ENCODE measurements at regions of chr6 and their contacts with region 1.

Region 1: GRCh38 chr6:3742426-3743344 is 8.8 kb downstream of the PXDC1 start:
- DNase-seq: peak; percentile 89
- H3K4me3 Mint-ChIP-seq: peak overlapping the region; percentile 44
- H3K27ac Mint-ChIP-seq: peak overlapping the region; percentile 42
- H3K4me1 Mint-ChIP-seq: peaks cover 17% of the 10 kb centered on the region
- H3K27me3 Mint-ChIP-seq: peaks cover 6% of the 10 kb centered on the region

Region 2: GRCh38 chr6:3825851-3826581 is 83.3 kb after region 1 on chr6:
- CTCF ChIA-PET with region 1: no interaction called
- POLR2A ChIA-PET with region 1: no interaction called
- DNase-seq: no peak
- H3K4me3 Mint-ChIP-seq: no peak overlapping the region
- H3K27ac Mint-ChIP-seq: no peak overlapping the region
- H3K4me1 Mint-ChIP-seq: no peaks in the 10 kb centered on the region
- H3K27me3 Mint-ChIP-seq: no peaks in the 10 kb centered on the region

Region 3: DNA sequence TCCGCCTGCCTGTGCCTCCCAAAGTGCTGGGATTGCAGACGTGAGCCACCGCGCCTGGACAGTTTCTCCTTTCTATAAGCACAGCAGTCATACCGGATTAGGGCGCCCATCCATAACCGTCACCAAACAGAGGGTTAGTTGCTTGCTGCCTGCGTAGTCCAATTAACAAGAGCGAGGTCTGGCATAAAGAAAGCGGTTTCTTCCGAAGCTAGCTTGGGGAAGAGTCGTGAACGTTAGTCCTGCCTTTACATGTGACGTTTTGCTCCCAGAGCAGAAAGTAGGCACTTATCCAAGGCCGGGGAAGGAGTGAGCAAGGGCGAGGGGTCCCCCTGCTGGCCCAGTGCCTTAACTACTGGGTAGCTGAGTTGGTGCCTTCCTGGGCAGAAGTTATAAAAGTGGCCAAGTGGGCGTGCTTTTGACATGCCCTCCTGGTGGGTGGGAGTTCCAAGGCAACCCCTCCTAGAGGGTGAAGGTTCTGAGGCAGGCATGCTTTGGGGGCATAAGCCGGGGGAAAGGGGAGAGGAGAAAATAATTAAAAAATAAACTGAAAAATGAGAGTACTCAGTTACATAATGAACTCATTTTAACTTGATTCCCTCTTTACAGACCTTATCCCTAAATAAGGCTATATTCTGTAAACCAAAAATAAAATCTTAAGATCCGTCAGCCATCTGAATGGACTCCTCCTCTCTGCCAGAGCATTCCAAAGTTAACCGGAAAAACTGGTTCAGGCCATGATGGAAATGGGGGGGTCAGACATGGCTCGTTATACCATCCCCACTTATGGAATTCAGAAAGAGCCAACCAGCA is 248.2 kb after region 1 on chr6:
- CTCF ChIA-PET with region 1: interaction called, 23 read pairs
- POLR2A ChIA-PET with region 1: no interaction called
- DNase-seq: peak; percentile 73
- H3K4me3 Mint-ChIP-seq: no peak overlapping the region
- H3K27ac Mint-ChIP-seq: no peak overlapping the region
- H3K4me1 Mint-ChIP-seq: peaks cover 6% of the 10 kb centered on the region
- H3K27me3 Mint-ChIP-seq: no peaks in the 10 kb centered on the region

Region 4: GRCh38 chr6:4008324-4009047 is 265.8 kb after region 1 on chr6:
- CTCF ChIA-PET with region 1: interaction called, 10 read pairs
- POLR2A ChIA-PET with region 1: no interaction called
- DNase-seq: no peak
- H3K4me3 Mint-ChIP-seq: no peak overlapping the region
- H3K27ac Mint-ChIP-seq: peak overlapping the region; percentile 5
- H3K4me1 Mint-ChIP-seq: peaks cover 48% of the 10 kb centered on the region
- H3K27me3 Mint-ChIP-seq: no peaks in the 10 kb centered on the region

Measured in activated CD4-positive, alpha-beta memory T cell treated with anti-CD3 and anti-CD28 coated beads, Interleukin-2, amount 10 ng/mL, durations not matched to agents 7 days and 5 days (primary cell).